Naive thymus-derived CD4-positive, alpha-beta T cell (primary cell): ENCODE measurements at regions of chr3 and their contacts with region 1.

Region 1: GRCh38 chr3:87082796-87083440 is 92.0 kb upstream of the VGLL3 start:
- DNase-seq: no peak
- ATAC-seq: no peak
- H3K4me3 ChIP-seq: no peak overlapping the region
- H3K4me3 Mint-ChIP-seq: no peak overlapping the region
- H3K27ac ChIP-seq: no peak overlapping the region
- H3K27ac Mint-ChIP-seq: no peak overlapping the region
- H3K4me1 ChIP-seq: no peaks in the 10 kb centered on the region
- H3K4me1 Mint-ChIP-seq: peaks cover 0 to 11% (median 0%) of the 10 kb centered on the region in 7 donors
- H3K27me3 ChIP-seq: no peaks in the 10 kb centered on the region
- H3K27me3 Mint-ChIP-seq: peaks cover 0 to 4% (median 0%) of the 10 kb centered on the region in 5 donors

Region 2: DNA sequence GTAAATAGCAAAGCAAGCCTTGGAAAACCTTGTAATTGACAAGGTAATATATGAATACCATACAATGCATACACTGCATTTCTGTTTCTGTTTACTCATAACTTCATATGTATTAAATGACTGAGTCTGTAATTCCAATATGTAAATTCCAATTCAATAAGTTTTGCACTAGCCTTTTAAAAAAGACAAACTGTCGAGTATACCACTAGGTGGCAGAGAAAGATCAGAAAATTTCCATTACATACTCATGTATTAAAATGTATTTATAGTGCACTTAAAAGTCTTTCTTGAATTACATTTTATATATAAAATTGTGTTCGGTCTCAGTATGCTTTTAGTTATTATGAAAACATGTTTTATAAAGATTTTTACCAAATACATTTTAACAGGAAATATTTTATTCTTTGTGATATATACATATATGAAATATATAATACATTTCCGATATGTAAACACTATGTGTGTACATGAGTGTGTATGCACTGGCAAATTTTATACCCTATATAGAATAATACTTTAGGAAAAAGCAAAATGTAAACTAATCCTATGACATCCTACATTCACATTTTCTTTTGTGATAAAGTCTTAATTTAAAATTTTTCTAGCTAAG is 308.7 kb before region 1 on chr3:
- CTCF ChIA-PET with region 1: no interaction called
- POLR2A ChIA-PET with region 1: no interaction called
- intact Hi-C with region 1: loop called in 1 of 2 experiments (anchors 10 kb)
- DNase-seq: no peak
- ATAC-seq: no peak
- H3K4me3 ChIP-seq: no peak overlapping the region
- H3K4me3 Mint-ChIP-seq: no peak overlapping the region
- H3K27ac ChIP-seq: no peak overlapping the region
- H3K27ac Mint-ChIP-seq: no peak overlapping the region
- H3K4me1 ChIP-seq: no peaks in the 10 kb centered on the region
- H3K4me1 Mint-ChIP-seq: no peaks in the 10 kb centered on the region
- H3K27me3 ChIP-seq: no peaks in the 10 kb centered on the region
- H3K27me3 Mint-ChIP-seq: no peaks in the 10 kb centered on the region

Region 3: GRCh38 chr3:86969500-86970189 is 113.3 kb before region 1 on chr3:
- CTCF ChIA-PET with region 1: no interaction called
- POLR2A ChIA-PET with region 1: no interaction called
- intact Hi-C with region 1: loop called in 1 of 2 experiments (anchors 2 kb)
- DNase-seq: no peak
- ATAC-seq: no peak
- H3K4me3 ChIP-seq: no peak overlapping the region
- H3K4me3 Mint-ChIP-seq: no peak overlapping the region
- H3K27ac ChIP-seq: no peak overlapping the region
- H3K27ac Mint-ChIP-seq: no peak overlapping the region
- H3K4me1 ChIP-seq: no peaks in the 10 kb centered on the region
- H3K4me1 Mint-ChIP-seq: no peaks in the 10 kb centered on the region
- H3K27me3 ChIP-seq: no peaks in the 10 kb centered on the region
- H3K27me3 Mint-ChIP-seq: no peaks in the 10 kb centered on the region

Region 4: DNA sequence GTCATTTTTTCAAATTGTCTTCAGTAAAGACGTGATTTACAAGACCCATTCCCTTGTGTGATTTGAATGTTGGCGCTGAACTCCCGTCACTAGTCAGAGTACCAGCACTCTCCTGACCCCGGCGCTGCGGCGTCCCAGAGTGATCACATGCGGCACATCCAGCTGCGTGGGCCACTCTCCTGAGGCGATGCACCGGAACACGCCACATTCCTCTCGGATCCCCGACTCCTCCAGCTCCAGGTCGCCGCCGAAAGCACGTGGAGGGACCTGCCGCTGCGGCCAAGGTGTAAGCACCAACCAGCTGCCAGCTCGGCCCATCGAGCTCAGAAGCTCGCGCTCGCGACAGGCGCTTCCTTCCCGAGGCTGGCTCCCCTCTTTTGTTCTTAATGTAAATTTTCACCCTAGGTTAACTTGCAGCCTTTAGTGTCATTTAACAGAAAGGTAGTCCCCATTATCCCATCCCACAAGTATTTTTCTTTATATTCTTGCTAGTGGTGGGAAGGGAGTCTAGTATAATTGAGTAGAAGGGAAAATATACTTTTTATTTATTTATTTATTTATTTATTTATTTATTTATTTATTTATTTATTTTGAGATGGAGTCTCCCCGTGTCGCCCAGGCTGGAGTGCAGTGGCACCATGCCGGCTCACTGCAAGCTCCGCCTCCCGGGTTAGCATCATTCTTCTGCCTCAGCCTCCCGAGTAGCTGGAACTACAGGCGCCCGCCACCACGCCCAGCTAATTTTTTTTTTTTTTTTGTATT is 30.2 kb before region 1 on chr3:
- CTCF ChIA-PET with region 1: no interaction called
- POLR2A ChIA-PET with region 1: no interaction called
- intact Hi-C with region 1: no loop called
- DNase-seq: no peak
- ATAC-seq: no peak
- H3K4me3 ChIP-seq: no peak overlapping the region
- H3K4me3 Mint-ChIP-seq: no peak overlapping the region
- H3K27ac ChIP-seq: no peak overlapping the region
- H3K27ac Mint-ChIP-seq: no peak overlapping the region
- H3K4me1 ChIP-seq: no peaks in the 10 kb centered on the region
- H3K4me1 Mint-ChIP-seq: no peaks in the 10 kb centered on the region
- H3K27me3 ChIP-seq: no peaks in the 10 kb centered on the region
- H3K27me3 Mint-ChIP-seq: peaks cover 0 to 6% (median 4%) of the 10 kb centered on the region in 5 donors

Region 5: GRCh38 chr3:87541723-87542122 is 458.8 kb after region 1 on chr3:
- CTCF ChIA-PET with region 1: no interaction called
- POLR2A ChIA-PET with region 1: no interaction called
- intact Hi-C with region 1: no loop called
- DNase-seq: no peak
- ATAC-seq: no peak
- H3K4me3 ChIP-seq: no peak overlapping the region
- H3K4me3 Mint-ChIP-seq: no peak overlapping the region
- H3K27ac ChIP-seq: no peak overlapping the region
- H3K27ac Mint-ChIP-seq: no peak overlapping the region
- H3K4me1 ChIP-seq: no peaks in the 10 kb centered on the region
- H3K4me1 Mint-ChIP-seq: no peaks in the 10 kb centered on the region
- H3K27me3 ChIP-seq: no peaks in the 10 kb centered on the region
- H3K27me3 Mint-ChIP-seq: no peaks in the 10 kb centered on the region